HepG2 (cell line): ENCODE measurements at regions of chr2 and their contacts with region 1.

Region 1: GRCh38 chr2:208101716-208102631 is 22.4 kb downstream of the CRYGD start:
- DNase-seq: peak; percentile 46
- ATAC-seq: peak; percentile 79
- H3K4me3 ChIP-seq: no peak overlapping the region
- H3K27ac ChIP-seq: no peak overlapping the region
- H3K4me1 ChIP-seq: peaks cover 12% of the 10 kb centered on the region
- H3K27me3 ChIP-seq: peaks cover 0 to 27% of the 10 kb centered on the region in 2 experiments; a peak in 3 of 5 replicates
- CTCF ChIP-seq: peak; percentile 69
- EP300 ChIP-seq: no peak
- POLR2A ChIP-seq: no peak
- RAD21 ChIP-seq: peak; percentile 63

Region 2: GRCh38 chr2:208112969-208113368 is 11.0 kb after region 1 on chr2:
- CTCF ChIA-PET with region 1: no interaction called
- POLR2A ChIA-PET with region 1: no interaction called
- in situ Hi-C with region 1: no loop called
- intact Hi-C with region 1: no loop called
- DNase-seq: no peak
- ATAC-seq: peak; percentile 66
- H3K4me3 ChIP-seq: no peak overlapping the region
- H3K27ac ChIP-seq: no peak overlapping the region
- H3K4me1 ChIP-seq: peaks cover 28% of the 10 kb centered on the region
- H3K27me3 ChIP-seq: peaks cover 1 to 11% of the 10 kb centered on the region in 2 experiments; a peak in 2 of 5 replicates
- CTCF ChIP-seq: no peak
- EP300 ChIP-seq: no peak
- POLR2A ChIP-seq: no peak
- RAD21 ChIP-seq: no peak

Region 3: GRCh38 chr2:208148803-208149202 is 46.8 kb after region 1 on chr2:
- CTCF ChIA-PET with region 1: no interaction called
- POLR2A ChIA-PET with region 1: no interaction called
- in situ Hi-C with region 1: no loop called
- intact Hi-C with region 1: loop called (anchors 1 kb)
- DNase-seq: no peak
- ATAC-seq: peak; percentile 46; the same call in 1 of the 3 replicates
- H3K4me3 ChIP-seq: no peak overlapping the region
- H3K27ac ChIP-seq: no peak overlapping the region
- H3K4me1 ChIP-seq: peaks cover under 1% of the 10 kb centered on the region
- H3K27me3 ChIP-seq: peaks cover 0 to 5% of the 10 kb centered on the region in 2 experiments; a peak in 1 of 5 replicates
- CTCF ChIP-seq: peak; percentile 27; the same call in 1 of the 2 replicates
- EP300 ChIP-seq: no peak
- POLR2A ChIP-seq: no peak
- RAD21 ChIP-seq: no peak

Region 4: DNA sequence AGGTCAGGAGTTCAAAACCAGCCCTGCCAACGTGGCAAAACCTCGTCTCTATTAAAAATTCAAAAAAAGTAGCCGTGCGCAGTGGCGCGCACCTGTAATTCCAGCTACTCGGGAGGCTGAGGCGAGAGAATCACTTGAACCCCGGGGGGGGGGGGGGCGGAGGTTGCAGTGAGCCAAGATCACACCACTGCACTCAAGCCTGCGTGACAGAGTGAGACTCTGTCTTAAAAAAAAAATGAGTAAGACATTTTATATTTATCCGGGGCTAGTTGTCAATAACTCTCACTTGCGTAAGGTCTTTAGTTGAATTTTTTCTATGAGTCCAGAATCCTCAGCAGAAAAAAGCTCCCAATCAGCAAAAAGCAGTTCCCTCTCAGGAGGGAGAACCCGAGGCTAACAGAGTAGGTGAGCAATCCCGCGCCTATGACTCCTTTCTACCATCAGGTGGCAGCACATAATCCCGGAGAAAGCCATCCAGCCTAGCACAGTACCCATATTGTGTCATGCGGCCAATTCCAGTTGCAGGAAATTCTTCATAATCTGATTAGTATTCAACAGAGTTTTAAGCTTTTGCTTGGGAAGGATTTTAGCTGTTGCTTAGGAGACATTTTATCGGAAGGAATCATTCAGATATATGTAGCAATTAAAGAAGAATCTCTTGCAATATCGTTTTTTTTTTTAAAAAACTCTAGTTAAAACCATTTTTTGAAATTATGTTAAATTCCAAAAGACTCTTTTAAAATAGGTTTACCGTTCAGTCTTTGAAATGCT is 73.3 kb after region 1 on chr2:
- CTCF ChIA-PET with region 1: no interaction called
- POLR2A ChIA-PET with region 1: no interaction called
- in situ Hi-C with region 1: no loop called
- intact Hi-C with region 1: loop called (anchors 1 kb)
- DNase-seq: peak; percentile 86
- ATAC-seq: peak; percentile 97
- H3K4me3 ChIP-seq: peak overlapping the region in 1 of 3 experiments; percentile 16; a peak in 1 of 6 replicates
- H3K27ac ChIP-seq: no peak overlapping the region
- H3K4me1 ChIP-seq: peaks cover 51% of the 10 kb centered on the region
- H3K27me3 ChIP-seq: peaks cover 0 to 9% of the 10 kb centered on the region in 2 experiments; a peak in 2 of 5 replicates
- CTCF ChIP-seq: peak; percentile 92
- EP300 ChIP-seq: no peak; a peak in 1 of 4 replicates
- POLR2A ChIP-seq: no peak
- RAD21 ChIP-seq: peak; percentile 83

Region 5: DNA sequence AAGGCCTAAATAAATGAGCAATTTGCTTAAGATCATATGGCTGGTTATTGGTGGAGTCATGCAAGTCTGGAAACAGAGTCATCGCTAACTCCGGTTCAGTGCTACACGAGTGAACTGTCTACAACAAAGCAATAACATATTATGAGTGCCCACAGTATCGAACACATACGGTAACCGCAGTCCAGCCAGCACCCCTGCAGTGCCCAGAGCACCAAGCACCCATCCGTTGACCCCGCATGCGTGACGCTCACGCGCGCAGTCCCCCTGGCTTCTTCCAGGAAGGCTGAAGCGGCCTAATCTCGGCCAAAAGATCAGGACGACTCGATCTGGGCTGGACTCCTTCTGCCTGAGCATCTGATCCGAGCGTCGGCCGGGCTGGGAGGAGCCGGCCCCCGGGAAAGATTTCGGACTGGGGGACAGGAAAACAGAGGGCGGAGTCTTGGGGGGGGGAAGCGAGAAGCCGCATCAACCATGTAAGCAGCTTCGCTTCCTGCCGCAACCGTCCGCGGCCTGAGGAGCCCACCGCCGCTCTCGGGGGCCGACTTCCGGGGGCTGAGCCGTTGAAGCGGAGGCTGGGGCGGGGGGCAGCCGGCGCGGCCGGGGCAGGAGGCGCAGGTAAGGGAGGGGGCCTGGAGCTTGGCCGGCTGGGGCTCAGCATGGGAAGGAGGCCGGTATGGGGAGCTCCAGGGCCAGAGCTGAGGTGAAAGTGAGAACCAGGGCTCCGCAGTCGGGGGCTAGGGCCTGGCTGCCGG is 164.0 kb after region 1 on chr2 and contains the start of gene PIKFYVE:
- CTCF ChIA-PET with region 1: interaction called, 13 read pairs
- POLR2A ChIA-PET with region 1: no interaction called
- in situ Hi-C with region 1: no loop called
- intact Hi-C with region 1: loop called (anchors 1 kb)
- DNase-seq: peak; percentile 99
- ATAC-seq: peak; percentile 94
- H3K4me3 ChIP-seq: peak within 1 kb of the TSS; percentile 71 to 87 (median 86)
- H3K27ac ChIP-seq: peak within 1 kb of the TSS; percentile 79
- H3K4me1 ChIP-seq: peaks cover 45% of the 10 kb centered on the region
- H3K27me3 ChIP-seq: no peaks in the 10 kb centered on the region; a peak in 1 of 5 replicates
- CTCF ChIP-seq: 0 out of 2 replicates have a peak, but pooled peaks have one; percentile 40
- EP300 ChIP-seq: peak; percentile 34 to 81; a peak in 2 of 4 replicates
- POLR2A ChIP-seq: peak; percentile 62 to 76; a peak in 3 of 4 replicates
- RAD21 ChIP-seq: 0 out of 2 replicates have a peak, but pooled peaks have one; percentile 12
- total RNA-seq, gene PIKFYVE: 21.7 and 24.4 TPM in 2 replicates

Region 6: DNA sequence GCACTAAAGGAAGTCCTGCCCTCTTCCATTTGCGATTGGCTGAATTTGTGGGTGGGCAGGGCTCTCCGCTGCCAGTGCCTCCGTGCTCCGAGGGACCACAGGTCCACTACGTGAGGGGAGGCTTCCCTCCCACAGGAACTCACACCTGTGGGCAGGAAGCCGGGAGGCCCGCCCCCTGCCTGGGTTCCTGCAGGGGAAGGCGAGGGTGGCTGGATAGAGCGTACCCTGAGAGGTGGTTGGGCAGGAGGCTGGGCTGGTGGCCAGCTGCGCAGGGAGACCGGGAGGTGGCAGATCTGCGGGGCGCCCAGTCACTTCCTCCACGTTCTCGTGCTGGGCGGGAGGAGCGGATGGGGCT is 257.6 kb after region 1 on chr2:
- CTCF ChIA-PET with region 1: no interaction called
- POLR2A ChIA-PET with region 1: no interaction called
- in situ Hi-C with region 1: no loop called
- intact Hi-C with region 1: loop called (anchors 10 kb)
- DNase-seq: no peak
- ATAC-seq: peak; percentile 41
- H3K4me3 ChIP-seq: no peak overlapping the region
- H3K27ac ChIP-seq: no peak overlapping the region
- H3K4me1 ChIP-seq: peaks cover 7% of the 10 kb centered on the region
- H3K27me3 ChIP-seq: no peaks in the 10 kb centered on the region
- CTCF ChIP-seq: no peak
- EP300 ChIP-seq: no peak
- POLR2A ChIP-seq: no peak
- RAD21 ChIP-seq: no peak